Activated T-helper 2 cell treated with anti-CD3 and anti-CD28 coated beads, Interferon-gamma antibody, Interleukin-2, Interleukin-4, amounts not matched to agents 10 μg/mL and 5 μg/mL and 100 μg/mL, durations not matched to agents 14 hours and 24 hours and 36 hours (primary cell): ENCODE measurements at regions of chr11 and their contacts with region 1.

Region 1: GRCh38 chr11:90204832-90205646 is 17.8 kb downstream of the CHORDC1 start:
- DNase-seq: no peak
- H3K4me3 Mint-ChIP-seq: no peak overlapping the region
- H3K27ac Mint-ChIP-seq: peak overlapping the region; percentile 4
- H3K4me1 Mint-ChIP-seq: peaks cover 9% of the 10 kb centered on the region
- H3K27me3 Mint-ChIP-seq: no peaks in the 10 kb centered on the region

Region 2: GRCh38 chr11:90192869-90193582 is 12.0 kb before region 1 on chr11:
- intact Hi-C with region 1: no loop called
- DNase-seq: no peak
- H3K4me3 Mint-ChIP-seq: no peak overlapping the region
- H3K27ac Mint-ChIP-seq: no peak overlapping the region
- H3K4me1 Mint-ChIP-seq: no peaks in the 10 kb centered on the region
- H3K27me3 Mint-ChIP-seq: no peaks in the 10 kb centered on the region

Region 3: GRCh38 chr11:90222459-90223247 is 17.6 kb after region 1 on chr11 and contains the start of gene CHORDC1:
- intact Hi-C with region 1: loop called (anchors 2 kb)
- DNase-seq: peak; percentile 92
- H3K4me3 Mint-ChIP-seq: peak within 1 kb of the TSS; percentile 95
- H3K27ac Mint-ChIP-seq: peak within 1 kb of the TSS; percentile 94
- H3K4me1 Mint-ChIP-seq: peaks cover 39% of the 10 kb centered on the region
- H3K27me3 Mint-ChIP-seq: no peaks in the 10 kb centered on the region
- total RNA-seq, gene CHORDC1: 100 and 109 TPM in 2 replicates

Region 4: GRCh38 chr11:90250970-90251369 is 45.9 kb after region 1 on chr11:
- intact Hi-C with region 1: no loop called
- DNase-seq: no peak
- H3K4me3 Mint-ChIP-seq: peak overlapping the region; percentile 81
- H3K27ac Mint-ChIP-seq: peak overlapping the region; percentile 49
- H3K4me1 Mint-ChIP-seq: peaks cover 14% of the 10 kb centered on the region
- H3K27me3 Mint-ChIP-seq: peaks cover 6% of the 10 kb centered on the region